Dorsolateral prefrontal cortex (tissue), 120 donors: ENCODE measurements at regions of chr7 and their contacts with region 1.

Region 1: GRCh38 chr7:876167-876967 is at the start of gene GET4:
- DNase-seq: peak; percentile 97 to 100 (median 98)
- H3K4me3 ChIP-seq: peak within 1 kb of the TSS; percentile 50 to 92 (median 80)
- H3K27ac ChIP-seq: peak within 1 kb of the TSS; percentile 74 to 97 (median 93)
- H3K27me3 ChIP-seq: no peaks in the 10 kb centered on the region
- CTCF ChIP-seq: peak in 47 of 56 donors; percentile 0 to 65 (median 47)
- total RNA-seq, gene GET4: 25.4 to 54.1 (median 40.7) TPM

Region 2: GRCh38 chr7:786472-787255 is 89.7 kb before region 1 on chr7:
- intact Hi-C with region 1: loop called (anchors 2 to 5 kb)
- DNase-seq: peak in 9 of 10 donors; percentile 32 to 77 (median 60)
- H3K4me3 ChIP-seq: no peak overlapping the region
- H3K27ac ChIP-seq: no peak overlapping the region
- H3K27me3 ChIP-seq: no peaks in the 10 kb centered on the region
- CTCF ChIP-seq: peak; percentile 37 to 81 (median 70)

Region 3: DNA sequence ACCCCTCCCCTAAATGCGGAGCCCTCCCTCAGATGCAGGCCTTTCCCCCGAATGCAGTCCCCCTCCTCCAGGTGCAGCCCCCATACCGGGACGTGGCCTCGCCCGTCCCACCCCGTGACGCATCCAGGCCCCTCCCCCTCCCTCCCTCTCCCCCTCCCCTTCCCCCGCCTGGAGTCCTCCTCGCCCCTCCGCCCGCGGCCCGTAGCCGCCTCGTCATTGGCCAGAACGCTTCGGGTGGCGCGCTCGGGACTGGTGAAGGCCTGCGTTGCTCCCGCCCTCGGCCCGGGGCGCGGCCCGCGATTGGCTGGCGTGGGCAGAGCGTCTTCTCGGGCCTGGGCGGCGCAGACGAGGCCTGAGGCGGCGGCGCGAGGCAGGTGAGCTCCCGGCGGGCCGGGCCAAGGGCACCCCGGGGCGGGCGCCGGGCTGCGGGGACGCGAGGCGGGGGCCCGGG is 60.0 kb before region 1 on chr7:
- intact Hi-C with region 1: loop called in 1 of 2 experiments (anchors 5 kb)
- DNase-seq: peak; percentile 92 to 99 (median 96)
- H3K4me3 ChIP-seq: peak overlapping the region in 58 of 59 donors; percentile 19 to 94 (median 75)
- H3K27ac ChIP-seq: peak overlapping the region in 35 of 59 donors; percentile 27 to 97 (median 78)
- H3K27me3 ChIP-seq: no peaks in the 10 kb centered on the region
- CTCF ChIP-seq: no peak